Naive thymus-derived CD4-positive, alpha-beta T cell (primary cell): ENCODE measurements at regions of chr3 and their contacts with region 1.

Region 1: GRCh38 chr3:120348981-120349818 is at the start of gene LRRC58:
- DNase-seq: peak; percentile 85 to 95 (median 94)
- ATAC-seq: peak; percentile 95
- H3K4me3 ChIP-seq: peak within 1 kb of the TSS; percentile 91
- H3K4me3 Mint-ChIP-seq: peak within 1 kb of the TSS; percentile 85 to 96 (median 94)
- H3K27ac ChIP-seq: peak within 1 kb of the TSS; percentile 76
- H3K27ac Mint-ChIP-seq: peak within 1 kb of the TSS; percentile 87 to 97 (median 93)
- H3K4me1 ChIP-seq: peaks cover 20 to 26% of the 10 kb centered on the region in 2 donors
- H3K4me1 Mint-ChIP-seq: peaks cover 39 to 54% (median 48%) of the 10 kb centered on the region in 7 donors
- H3K27me3 ChIP-seq: no peaks in the 10 kb centered on the region
- H3K27me3 Mint-ChIP-seq: peaks cover 0 to 29% (median 0%) of the 10 kb centered on the region in 5 donors
- total RNA-seq, gene LRRC58: 12.3 to 24.1 (median 20.8) TPM

Region 2: DNA sequence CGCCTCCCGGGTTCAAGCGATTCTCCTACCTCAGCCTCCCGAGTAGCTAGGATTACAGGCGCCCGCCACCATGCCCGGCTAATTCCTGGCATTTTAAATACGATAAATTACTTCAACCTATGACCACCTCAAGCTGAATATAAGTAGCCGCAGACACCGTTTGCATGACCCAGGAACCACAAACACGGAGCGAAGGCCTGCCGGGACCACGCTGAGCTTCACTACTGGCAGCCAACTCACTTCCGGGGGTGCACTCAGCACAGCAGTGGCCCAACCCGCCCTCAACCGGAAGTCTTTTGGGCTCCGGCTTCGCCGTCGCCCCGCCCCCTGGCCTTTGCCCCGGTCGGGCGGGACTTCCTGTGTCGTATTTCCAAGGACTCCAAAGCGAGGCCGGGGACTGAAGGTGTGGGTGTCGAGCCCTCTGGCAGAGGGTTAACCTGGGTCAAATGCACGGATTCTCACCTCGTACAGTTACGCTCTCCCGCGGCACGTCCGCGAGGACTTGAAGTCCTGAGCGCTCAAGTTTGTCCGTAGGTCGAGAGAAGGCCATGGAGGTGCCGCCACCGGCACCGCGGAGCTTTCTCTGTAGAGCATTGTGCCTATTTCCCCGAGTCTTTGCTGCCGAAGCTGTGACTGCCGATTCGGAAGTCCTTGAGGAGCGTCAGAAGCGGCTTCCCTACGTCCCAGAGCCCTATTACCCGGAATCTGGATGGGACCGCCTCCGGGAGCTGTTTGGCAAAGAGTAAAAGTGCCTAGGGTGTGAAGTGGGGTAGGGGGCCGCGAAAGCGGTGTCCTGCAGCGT is 850.8 kb before region 1 on chr3 and contains the start of gene TIMMDC1:
- CTCF ChIA-PET with region 1: no interaction called
- POLR2A ChIA-PET with region 1: interaction called, 16 read pairs
- intact Hi-C with region 1: loop called in 1 of 2 experiments (anchors 1 kb)
- DNase-seq: peak; percentile 95 to 98 (median 97)
- ATAC-seq: peak; percentile 99
- H3K4me3 ChIP-seq: peak within 1 kb of the TSS; percentile 97
- H3K4me3 Mint-ChIP-seq: peak within 1 kb of the TSS; percentile 95 to 100 (median 99)
- H3K27ac ChIP-seq: peak within 1 kb of the TSS; percentile 96
- H3K27ac Mint-ChIP-seq: peak within 1 kb of the TSS; percentile 98 to 100 (median 99)
- H3K4me1 ChIP-seq: peaks cover 18% of the 10 kb centered on the region in 2 donors
- H3K4me1 Mint-ChIP-seq: peaks cover 22 to 41% (median 34%) of the 10 kb centered on the region in 7 donors
- H3K27me3 ChIP-seq: no peaks in the 10 kb centered on the region
- H3K27me3 Mint-ChIP-seq: no peaks in the 10 kb centered on the region
- total RNA-seq, gene TIMMDC1: 27.1 to 80.1 (median 73.4) TPM

Region 3: DNA sequence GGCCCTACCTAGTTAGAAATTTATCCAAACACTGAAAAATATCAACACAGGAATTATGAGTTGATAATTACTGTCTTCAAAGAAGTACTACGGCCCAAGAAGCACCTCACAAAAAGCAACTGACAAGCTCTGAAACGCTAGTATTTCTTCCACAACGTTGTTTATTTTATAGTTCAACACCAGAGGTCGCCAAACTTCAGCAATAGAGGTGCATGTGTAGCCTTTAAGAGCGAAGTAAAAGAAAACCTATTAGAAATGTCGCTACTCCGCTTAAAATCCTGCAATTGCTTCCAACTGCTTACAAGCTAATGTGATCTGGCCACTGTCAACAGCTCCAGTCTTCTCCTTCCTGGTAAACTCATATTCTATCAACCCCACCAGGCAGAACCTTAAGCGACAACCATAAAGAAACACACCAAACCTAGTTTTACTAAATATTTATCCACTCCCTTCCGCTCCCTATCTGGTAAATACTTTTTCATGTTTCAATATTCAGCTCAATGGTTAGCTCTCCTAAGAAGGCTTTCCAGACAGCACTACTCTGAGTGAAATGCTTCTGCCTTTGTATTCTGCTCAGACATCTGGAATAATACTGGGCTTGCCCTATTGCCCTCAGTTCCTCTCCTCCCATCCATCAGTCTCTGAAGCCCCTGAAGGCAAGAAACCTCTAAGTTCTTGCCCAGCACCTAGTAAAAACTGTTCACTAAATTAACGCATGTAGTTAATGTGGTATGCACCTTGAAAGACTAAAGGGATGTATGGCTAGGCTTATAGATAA is 457.1 kb before region 1 on chr3:
- CTCF ChIA-PET with region 1: interaction called, 4 read pairs
- POLR2A ChIA-PET with region 1: no interaction called
- intact Hi-C with region 1: loop called (anchors 5 to 10 kb)
- DNase-seq: peak in 7 of 9 donors; percentile 38 to 68 (median 60)
- ATAC-seq: peak; percentile 78
- H3K4me3 ChIP-seq: no peak overlapping the region
- H3K4me3 Mint-ChIP-seq: peak overlapping the region in 1 of 10 donors; percentile 8
- H3K27ac ChIP-seq: no peak overlapping the region
- H3K27ac Mint-ChIP-seq: peak overlapping the region in 2 of 9 donors; percentile 28 to 39
- H3K4me1 ChIP-seq: no peaks in the 10 kb centered on the region
- H3K4me1 Mint-ChIP-seq: peaks cover 2 to 19% (median 11%) of the 10 kb centered on the region in 7 donors
- H3K27me3 ChIP-seq: no peaks in the 10 kb centered on the region
- H3K27me3 Mint-ChIP-seq: no peaks in the 10 kb centered on the region

Region 4: GRCh38 chr3:120039642-120040610 is 309.3 kb before region 1 on chr3:
- CTCF ChIA-PET with region 1: no interaction called
- POLR2A ChIA-PET with region 1: no interaction called
- intact Hi-C with region 1: no loop called
- DNase-seq: no peak
- ATAC-seq: no peak
- H3K4me3 ChIP-seq: no peak overlapping the region
- H3K4me3 Mint-ChIP-seq: peak overlapping the region in 2 of 10 donors; percentile 30 to 52
- H3K27ac ChIP-seq: no peak overlapping the region
- H3K27ac Mint-ChIP-seq: peak overlapping the region in 2 of 9 donors; percentile 20 to 33
- H3K4me1 ChIP-seq: no peaks in the 10 kb centered on the region
- H3K4me1 Mint-ChIP-seq: peaks cover 4 to 65% (median 22%) of the 10 kb centered on the region in 7 donors
- H3K27me3 ChIP-seq: no peaks in the 10 kb centered on the region
- H3K27me3 Mint-ChIP-seq: no peaks in the 10 kb centered on the region

Region 5: DNA sequence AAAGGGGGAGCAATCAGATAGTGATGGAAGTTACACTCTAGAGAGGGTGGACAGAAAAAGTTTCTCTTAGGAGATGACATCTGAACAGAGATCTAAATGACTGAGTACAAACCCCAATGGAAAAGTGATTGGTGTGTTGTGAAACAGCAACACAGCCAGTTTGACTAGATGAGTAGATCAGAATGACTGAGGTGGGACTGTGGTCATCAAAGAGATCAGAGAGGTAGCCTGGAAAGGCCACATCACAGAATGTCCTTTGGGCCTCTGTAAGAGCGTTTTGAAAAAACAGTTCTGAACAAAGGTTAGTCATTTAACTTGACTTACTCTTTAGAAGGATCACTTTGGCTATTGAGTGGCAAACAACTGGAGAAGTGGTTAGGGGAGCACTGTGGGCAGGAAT is 10.7 kb before region 1 on chr3:
- CTCF ChIA-PET with region 1: interaction called, 3 read pairs
- POLR2A ChIA-PET with region 1: no interaction called
- intact Hi-C with region 1: loop called in 1 of 2 experiments (anchors 1 kb)
- DNase-seq: no peak
- ATAC-seq: no peak
- H3K4me3 ChIP-seq: no peak overlapping the region
- H3K4me3 Mint-ChIP-seq: peak overlapping the region in 2 of 10 donors; percentile 14 to 20
- H3K27ac ChIP-seq: no peak overlapping the region
- H3K27ac Mint-ChIP-seq: peak overlapping the region in 3 of 9 donors; percentile 6 to 32 (median 10)
- H3K4me1 ChIP-seq: no peaks in the 10 kb centered on the region
- H3K4me1 Mint-ChIP-seq: peaks cover 14 to 64% (median 49%) of the 10 kb centered on the region in 7 donors
- H3K27me3 ChIP-seq: no peaks in the 10 kb centered on the region
- H3K27me3 Mint-ChIP-seq: no peaks in the 10 kb centered on the region

Region 6: DNA sequence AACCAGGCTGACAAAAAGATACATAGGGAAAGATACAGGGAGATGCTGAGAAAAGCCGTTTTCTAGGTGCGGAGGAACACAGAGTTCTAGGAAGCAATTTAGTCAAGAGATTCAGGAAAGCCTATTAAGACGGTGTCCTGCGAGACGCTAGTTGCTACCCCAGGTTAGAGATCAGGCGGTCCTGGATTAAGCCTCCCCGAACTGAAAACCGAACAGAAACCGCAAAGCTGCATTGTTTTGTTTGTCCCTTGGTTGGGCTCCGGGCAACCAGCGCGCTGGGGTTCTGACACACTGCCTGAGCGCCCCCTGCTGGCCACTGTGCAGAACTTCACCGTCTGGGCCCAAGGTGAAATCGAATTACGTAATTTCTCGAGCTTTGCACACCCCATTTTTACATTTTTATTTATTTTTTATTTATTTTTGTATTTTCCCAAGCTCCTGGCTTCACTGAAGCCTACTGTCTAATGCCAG is 209.6 kb after region 1 on chr3:
- CTCF ChIA-PET with region 1: interaction called, 3 read pairs
- POLR2A ChIA-PET with region 1: no interaction called
- intact Hi-C with region 1: loop called (anchors 2 kb)
- DNase-seq: peak; percentile 80 to 89 (median 88)
- ATAC-seq: peak; percentile 97
- H3K4me3 ChIP-seq: peak overlapping the region; percentile 61
- H3K4me3 Mint-ChIP-seq: peak overlapping the region; percentile 75 to 87 (median 82)
- H3K27ac ChIP-seq: peak overlapping the region; percentile 58
- H3K27ac Mint-ChIP-seq: peak overlapping the region; percentile 54 to 91 (median 83)
- H3K4me1 ChIP-seq: peaks cover 6% of the 10 kb centered on the region in 2 donors
- H3K4me1 Mint-ChIP-seq: peaks cover 6 to 23% (median 16%) of the 10 kb centered on the region in 7 donors
- H3K27me3 ChIP-seq: peaks cover 0 to 4% of the 10 kb centered on the region in 2 donors
- H3K27me3 Mint-ChIP-seq: peaks cover 0 to 13% (median 7%) of the 10 kb centered on the region in 5 donors

Region 7: DNA sequence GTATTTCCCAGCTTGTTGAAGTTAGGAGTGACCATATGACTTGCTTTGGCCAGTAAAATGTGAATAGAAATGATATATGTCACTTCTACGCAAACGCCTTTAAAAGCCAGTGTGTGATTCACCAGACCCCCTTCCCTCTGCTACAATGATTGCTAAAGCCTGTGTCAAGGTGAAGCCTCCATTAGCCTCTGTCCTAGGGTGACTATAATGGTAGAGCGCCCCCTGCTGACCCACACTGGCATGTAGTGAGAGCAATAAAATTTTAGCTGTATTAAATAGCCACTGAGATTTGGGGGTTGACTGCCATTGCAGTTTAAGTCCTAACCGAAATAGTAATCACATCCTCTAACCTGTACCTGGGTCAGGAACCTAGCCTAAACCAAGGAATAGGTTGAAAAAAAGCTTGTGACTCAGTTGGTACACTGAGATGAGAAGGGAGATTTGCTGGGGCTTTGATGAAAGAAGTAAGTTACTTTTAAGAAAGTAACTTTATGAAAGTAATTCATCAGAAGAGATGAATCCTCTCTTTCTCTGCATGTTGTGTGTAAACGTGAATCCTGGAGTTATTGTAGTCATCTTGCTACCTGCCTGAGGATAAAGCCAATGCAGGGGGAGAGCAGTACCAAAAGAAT is 445.9 kb after region 1 on chr3:
- CTCF ChIA-PET with region 1: no interaction called
- POLR2A ChIA-PET with region 1: no interaction called
- intact Hi-C with region 1: loop called in 1 of 2 experiments (anchors 10 kb)
- DNase-seq: peak; percentile 62 to 83 (median 79)
- ATAC-seq: peak; percentile 96
- H3K4me3 ChIP-seq: no peak overlapping the region
- H3K4me3 Mint-ChIP-seq: no peak overlapping the region
- H3K27ac ChIP-seq: no peak overlapping the region
- H3K27ac Mint-ChIP-seq: no peak overlapping the region
- H3K4me1 ChIP-seq: peaks cover 0 to 4% of the 10 kb centered on the region in 2 donors
- H3K4me1 Mint-ChIP-seq: peaks cover 0 to 20% (median 17%) of the 10 kb centered on the region in 7 donors
- H3K27me3 ChIP-seq: no peaks in the 10 kb centered on the region
- H3K27me3 Mint-ChIP-seq: no peaks in the 10 kb centered on the region

Region 8: DNA sequence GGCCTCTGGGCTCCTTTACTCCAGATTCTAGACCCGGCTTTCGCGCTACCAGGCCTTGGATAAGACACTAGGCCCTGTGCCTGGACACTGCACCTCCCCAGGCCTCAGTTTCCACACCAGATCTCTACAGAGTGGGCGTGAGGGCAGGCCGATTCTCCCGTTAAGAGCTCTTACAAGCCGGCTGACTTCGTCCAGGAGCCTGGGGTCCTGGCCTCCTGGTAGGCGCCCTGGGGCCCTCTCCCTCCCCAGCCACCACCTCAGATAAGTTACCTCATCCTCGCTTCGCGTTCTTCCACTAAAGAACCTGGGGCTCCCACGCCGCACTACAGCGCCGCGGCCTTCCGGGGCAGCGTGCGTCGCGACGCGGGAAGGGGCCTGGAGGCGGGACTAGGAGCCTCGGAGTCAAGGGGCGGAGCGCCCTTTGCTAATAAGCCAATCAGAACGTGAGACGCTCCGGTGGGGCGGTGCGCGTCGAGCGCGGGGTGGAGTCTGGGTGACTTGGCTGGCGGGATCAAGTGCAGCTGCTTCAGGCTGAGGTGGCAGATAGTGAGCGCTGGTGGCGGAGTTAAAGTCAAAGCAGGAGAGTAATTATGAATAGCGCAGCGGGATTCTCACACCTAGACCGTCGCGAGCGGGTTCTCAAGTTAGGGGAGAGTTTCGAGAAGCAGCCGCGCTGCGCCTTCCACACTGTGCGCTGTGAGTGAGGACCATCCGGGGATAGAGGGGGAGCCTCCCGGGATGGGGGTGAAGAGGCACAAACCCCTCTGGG is 1485.7 kb after region 1 on chr3 and contains the starts of genes EAF2 and IQCB1:
- CTCF ChIA-PET with region 1: no interaction called
- POLR2A ChIA-PET with region 1: no interaction called
- intact Hi-C with region 1: loop called in 1 of 2 experiments (anchors 2 kb)
- DNase-seq: peak; percentile 93 to 98 (median 97)
- ATAC-seq: peak; percentile 99
- H3K4me3 ChIP-seq: peak within 1 kb of the TSS; percentile 85
- H3K4me3 Mint-ChIP-seq: peak within 1 kb of the TSS; percentile 83 to 97 (median 93)
- H3K27ac ChIP-seq: peak within 1 kb of the TSS; percentile 89
- H3K27ac Mint-ChIP-seq: peak within 1 kb of the TSS; percentile 78 to 98 (median 92)
- H3K4me1 ChIP-seq: peaks cover 10 to 14% of the 10 kb centered on the region in 2 donors
- H3K4me1 Mint-ChIP-seq: peaks cover 32 to 65% (median 58%) of the 10 kb centered on the region in 7 donors
- H3K27me3 ChIP-seq: no peaks in the 10 kb centered on the region
- H3K27me3 Mint-ChIP-seq: no peaks in the 10 kb centered on the region
- total RNA-seq, gene EAF2: 6.4 to 16.1 (median 7.5) TPM
- total RNA-seq, gene IQCB1: 32.6 to 45.6 (median 35.8) TPM